Vagina (tissue), 2 donors: ENCODE measurements at regions of chr3 and their contacts with region 1.

Region 1: GRCh38 chr3:46705022-46705530 is 3.9 kb downstream of the TMIE start:
- DNase-seq: no peak
- H3K4me3 ChIP-seq: no peak overlapping the region
- H3K27ac ChIP-seq: no peak overlapping the region
- H3K4me1 ChIP-seq: peaks cover 37% of the 10 kb centered on the region
- H3K27me3 ChIP-seq: no peaks in the 10 kb centered on the region
- CTCF ChIP-seq: peak; percentile 89 to 96 (median 94)
- POLR2A ChIP-seq: no peak

Region 2: GRCh38 chr3:46895204-46895660 is 190.2 kb after region 1 on chr3:
- intact Hi-C with region 1: loop called (anchors 5 kb)
- DNase-seq: no peak
- H3K4me3 ChIP-seq: no peak overlapping the region
- H3K27ac ChIP-seq: no peak overlapping the region
- H3K4me1 ChIP-seq: peaks cover 49% of the 10 kb centered on the region
- H3K27me3 ChIP-seq: no peaks in the 10 kb centered on the region
- CTCF ChIP-seq: peak; percentile 82 to 92 (median 84)
- POLR2A ChIP-seq: no peak

Region 3: DNA sequence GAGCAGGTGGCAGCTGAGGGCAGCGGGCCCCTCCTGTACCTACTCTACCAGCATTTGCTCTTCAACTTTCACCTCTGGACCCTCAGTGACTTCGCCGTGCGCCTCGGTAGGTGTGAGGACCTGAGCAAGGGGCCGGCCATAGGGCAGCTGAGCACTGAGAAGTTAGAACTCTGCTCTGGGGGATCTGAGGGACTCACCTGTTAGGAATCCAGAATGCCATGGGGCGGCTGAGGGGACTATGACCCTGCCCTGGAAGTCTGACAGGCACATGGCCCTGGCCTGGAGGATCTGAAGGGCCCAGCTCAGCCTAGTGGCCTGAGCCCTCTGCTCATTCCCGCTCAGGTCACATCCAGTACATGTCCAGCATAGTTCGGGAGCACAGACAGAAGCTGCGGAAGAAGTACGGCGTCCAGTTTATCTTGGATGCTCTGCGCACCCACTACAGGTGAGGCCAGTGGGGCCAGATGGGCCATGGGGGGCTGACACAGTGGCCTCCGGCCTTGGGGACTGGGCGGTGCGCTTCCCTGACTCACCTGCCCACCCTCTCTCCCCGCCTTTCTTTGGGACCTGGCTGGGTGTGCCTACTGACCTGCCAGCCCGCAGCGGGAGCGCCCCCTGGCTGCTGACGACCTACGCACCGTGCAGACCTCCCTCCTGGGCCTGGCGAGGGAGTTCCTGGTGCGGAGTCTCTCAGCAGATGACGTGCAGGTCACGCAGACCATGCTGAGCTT is 293.2 kb after region 1 on chr3:
- intact Hi-C with region 1: loop called (anchors 10 kb)
- DNase-seq: no peak
- H3K4me3 ChIP-seq: no peak overlapping the region
- H3K27ac ChIP-seq: no peak overlapping the region
- H3K4me1 ChIP-seq: peaks cover 10% of the 10 kb centered on the region
- H3K27me3 ChIP-seq: no peaks in the 10 kb centered on the region
- CTCF ChIP-seq: peak; percentile 53 to 78 (median 54)
- POLR2A ChIP-seq: no peak